ENCODE measurements at regions of chr1 and their contacts with region 1.

Region 1: DNA sequence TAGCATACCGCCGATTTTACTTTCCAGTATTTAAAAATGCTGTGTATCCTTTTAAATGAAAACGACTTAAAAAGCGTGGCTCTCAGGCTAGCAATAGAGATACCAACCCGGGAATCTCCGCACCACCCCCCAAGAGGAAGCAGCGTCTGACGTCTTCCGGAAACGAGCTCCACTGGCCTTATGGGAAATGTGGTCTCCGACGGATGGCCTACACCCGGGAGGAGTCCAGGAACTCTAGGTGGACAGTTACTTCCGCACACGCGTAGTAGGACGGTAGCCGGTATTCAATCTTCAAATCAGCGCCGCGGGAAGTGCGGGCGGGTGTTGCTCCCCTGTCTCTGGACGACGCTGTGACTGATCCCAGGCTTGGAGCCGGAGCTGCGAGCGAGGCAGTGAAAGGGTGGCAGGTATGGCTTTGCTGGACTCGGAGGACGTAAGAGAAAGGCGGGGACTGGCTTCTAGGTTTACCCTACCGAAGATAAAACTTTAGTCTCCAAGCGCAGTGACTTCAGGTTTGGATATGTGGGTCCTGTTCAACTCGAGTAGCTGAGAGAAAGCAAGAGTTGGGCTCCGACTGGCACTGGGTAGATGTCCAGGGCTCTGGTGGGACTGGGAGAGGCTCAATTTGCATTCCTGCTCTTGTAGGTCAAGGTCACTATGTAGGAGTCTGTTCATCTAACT is at the start of gene ZNF684:
- DNase-seq: peak; percentile 65 to 96 (median 77)
- ATAC-seq: peak; percentile 94
- H3K4me3 ChIP-seq: peak within 1 kb of the TSS; percentile 80
- H3K4me3 Mint-ChIP-seq: peak within 1 kb of the TSS; percentile 95
- H3K27ac ChIP-seq: peak within 1 kb of the TSS; percentile 69 to 71
- H3K27ac Mint-ChIP-seq: peak within 1 kb of the TSS; percentile 78
- H3K4me1 ChIP-seq: peaks cover 12% of the 10 kb centered on the region
- H3K4me1 Mint-ChIP-seq: peaks cover 28% of the 10 kb centered on the region
- H3K27me3 ChIP-seq: no peaks in the 10 kb centered on the region
- H3K27me3 Mint-ChIP-seq: peaks cover 7% of the 10 kb centered on the region
- CTCF ChIP-seq: no peak
- total RNA-seq, gene ZNF684: 1.3 to 1.7 TPM

Region 2: GRCh38 chr1:39886757-39887231 is 644.7 kb before region 1 on chr1:
- CTCF ChIA-PET with region 1: no interaction called
- POLR2A ChIA-PET with region 1: no interaction called
- intact Hi-C with region 1: loop called in 1 of 2 experiments (anchors 5 kb)
- DNase-seq: no peak
- ATAC-seq: no peak
- H3K4me3 ChIP-seq: no peak overlapping the region
- H3K4me3 Mint-ChIP-seq: no peak overlapping the region
- H3K27ac ChIP-seq: no peak overlapping the region
- H3K27ac Mint-ChIP-seq: no peak overlapping the region
- H3K4me1 ChIP-seq: peaks cover 16% of the 10 kb centered on the region
- H3K4me1 Mint-ChIP-seq: peaks cover 18% of the 10 kb centered on the region
- H3K27me3 ChIP-seq: peaks cover 2 to 4% of the 10 kb centered on the region in 2 experiments
- H3K27me3 Mint-ChIP-seq: peaks cover 9% of the 10 kb centered on the region
- CTCF ChIP-seq: no peak

Region 3: GRCh38 chr1:40064797-40065499 is 466.6 kb before region 1 on chr1:
- CTCF ChIA-PET with region 1: no interaction called
- POLR2A ChIA-PET with region 1: no interaction called
- intact Hi-C with region 1: no loop called
- DNase-seq: peak in 2 of 14 experiments; percentile 14 to 36
- ATAC-seq: peak; percentile 65
- H3K4me3 ChIP-seq: no peak overlapping the region
- H3K4me3 Mint-ChIP-seq: peak overlapping the region; percentile 60
- H3K27ac ChIP-seq: peak overlapping the region; percentile 24 to 41
- H3K27ac Mint-ChIP-seq: peak overlapping the region; percentile 95
- H3K4me1 ChIP-seq: peaks cover 37% of the 10 kb centered on the region
- H3K4me1 Mint-ChIP-seq: peaks cover 74% of the 10 kb centered on the region
- H3K27me3 ChIP-seq: no peaks in the 10 kb centered on the region
- H3K27me3 Mint-ChIP-seq: no peaks in the 10 kb centered on the region
- CTCF ChIP-seq: no peak

Region 4: GRCh38 chr1:40153073-40153770 is 378.3 kb before region 1 on chr1:
- CTCF ChIA-PET with region 1: no interaction called
- POLR2A ChIA-PET with region 1: no interaction called
- intact Hi-C with region 1: loop called in 1 of 2 experiments (anchors 5 kb)
- DNase-seq: peak in 8 of 14 experiments; percentile 5 to 83 (median 36)
- ATAC-seq: peak; percentile 76
- H3K4me3 ChIP-seq: no peak overlapping the region
- H3K4me3 Mint-ChIP-seq: peak overlapping the region; percentile 2
- H3K27ac ChIP-seq: no peak overlapping the region
- H3K27ac Mint-ChIP-seq: peak overlapping the region; percentile 12
- H3K4me1 ChIP-seq: no peaks in the 10 kb centered on the region
- H3K4me1 Mint-ChIP-seq: peaks cover 7% of the 10 kb centered on the region
- H3K27me3 ChIP-seq: no peaks in the 10 kb centered on the region
- H3K27me3 Mint-ChIP-seq: no peaks in the 10 kb centered on the region
- CTCF ChIP-seq: peak; percentile 78

Region 5: GRCh38 chr1:40476924-40477677 is 54.4 kb before region 1 on chr1 and contains the start of gene ZFP69:
- CTCF ChIA-PET with region 1: interaction called, 3 read pairs
- POLR2A ChIA-PET with region 1: interaction called, 13 read pairs
- intact Hi-C with region 1: no loop called
- DNase-seq: peak; percentile 37 to 85 (median 64)
- ATAC-seq: peak; percentile 93
- H3K4me3 ChIP-seq: peak within 1 kb of the TSS; percentile 88
- H3K4me3 Mint-ChIP-seq: peak within 1 kb of the TSS; percentile 95
- H3K27ac ChIP-seq: peak within 1 kb of the TSS; percentile 36 to 49
- H3K27ac Mint-ChIP-seq: peak within 1 kb of the TSS; percentile 86
- H3K4me1 ChIP-seq: peaks cover 16% of the 10 kb centered on the region
- H3K4me1 Mint-ChIP-seq: peaks cover 29% of the 10 kb centered on the region
- H3K27me3 ChIP-seq: no peaks in the 10 kb centered on the region
- H3K27me3 Mint-ChIP-seq: no peaks in the 10 kb centered on the region
- CTCF ChIP-seq: no peak
- total RNA-seq, gene ZFP69: 1.1 to 1.4 TPM

Region 6: GRCh38 chr1:40668769-40669525 is 137.4 kb after region 1 on chr1:
- CTCF ChIA-PET with region 1: no interaction called
- POLR2A ChIA-PET with region 1: no interaction called
- intact Hi-C with region 1: loop called in 1 of 2 experiments (anchors 5 kb)
- DNase-seq: peak; percentile 72 to 91 (median 82)
- ATAC-seq: peak; percentile 78
- H3K4me3 ChIP-seq: peak overlapping the region; percentile 36
- H3K4me3 Mint-ChIP-seq: peak overlapping the region; percentile 69
- H3K27ac ChIP-seq: no peak overlapping the region
- H3K27ac Mint-ChIP-seq: no peak overlapping the region
- H3K4me1 ChIP-seq: peaks cover 23% of the 10 kb centered on the region
- H3K4me1 Mint-ChIP-seq: peaks cover 20% of the 10 kb centered on the region
- H3K27me3 ChIP-seq: no peaks in the 10 kb centered on the region
- H3K27me3 Mint-ChIP-seq: no peaks in the 10 kb centered on the region
- CTCF ChIP-seq: peak; percentile 94

Measured in CD4-positive, alpha-beta T cell (primary cell).